GM12878 (cell line): ENCODE measurements at regions of chr4 and their contacts with region 1.

Region 1: DNA sequence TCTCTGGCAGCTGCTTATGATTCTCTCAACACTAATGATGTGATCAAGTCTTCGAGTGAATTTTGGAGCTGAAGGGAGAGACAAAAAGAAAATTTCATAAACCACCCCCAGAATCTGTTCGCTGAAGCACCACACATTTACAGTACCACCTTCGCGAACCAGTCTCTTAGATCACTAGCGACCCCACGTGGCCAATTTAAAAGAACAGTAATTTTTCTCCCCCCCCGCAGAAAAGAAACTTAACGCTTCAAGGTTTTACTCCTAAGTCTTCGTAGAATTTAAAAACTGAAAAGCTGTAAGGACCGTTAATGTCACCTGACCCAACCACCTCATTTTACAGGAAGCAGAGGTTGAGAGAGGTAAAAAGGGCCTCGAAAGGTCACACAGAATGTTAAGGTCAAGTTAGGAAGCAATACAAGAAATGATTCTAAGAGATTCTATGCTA is 187.5 kb downstream of the QDPR start:
- DNase-seq: no peak
- ATAC-seq: peak; percentile 70
- H3K4me3 ChIP-seq: no peak overlapping the region
- H3K27ac ChIP-seq: no peak overlapping the region
- H3K4me1 ChIP-seq: no peaks in the 10 kb centered on the region
- H3K27me3 ChIP-seq: no peaks in the 10 kb centered on the region
- CTCF ChIP-seq: peak; percentile 45 to 64 (median 52)
- EP300 ChIP-seq: no peak
- POLR2A ChIP-seq: no peak
- RAD21 ChIP-seq: peak; percentile 66

Region 2: DNA sequence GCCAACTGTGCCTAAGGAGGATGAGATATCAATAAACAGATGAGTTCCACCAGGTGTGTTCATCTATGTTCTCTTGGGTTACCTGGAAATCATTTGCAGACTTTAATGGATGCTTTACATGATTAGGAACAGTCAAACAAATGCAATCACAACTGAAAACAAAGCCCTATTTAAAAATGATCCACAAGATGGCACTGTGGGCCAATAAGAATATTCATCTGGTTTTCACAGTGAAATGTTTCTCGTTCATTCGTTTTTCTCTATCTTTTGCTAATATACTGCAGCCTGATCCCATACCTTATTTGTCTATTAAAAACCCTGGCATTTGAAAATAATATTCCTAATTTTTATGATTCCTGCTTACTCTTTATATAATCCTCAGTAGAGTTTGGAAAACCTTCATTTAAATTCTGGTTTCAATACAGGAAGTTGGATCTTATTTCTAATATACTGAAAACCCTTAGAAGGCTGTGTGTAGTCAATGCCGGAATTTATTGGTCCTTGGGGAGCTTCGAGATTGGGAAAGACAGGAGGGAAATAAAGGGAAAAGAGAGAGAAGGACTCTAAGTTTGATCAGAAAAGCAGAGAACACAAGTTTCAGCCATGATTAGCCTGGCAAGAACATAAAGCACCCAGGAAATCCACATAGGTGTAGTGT is 1034.4 kb before region 1 on chr4:
- CTCF ChIA-PET with region 1: interaction called, 6 read pairs
- POLR2A ChIA-PET with region 1: no interaction called
- RAD21 ChIA-PET with region 1: interaction called, 3 read pairs
- SMC1A ChIA-PET with region 1: interaction called, 10 read pairs
- in situ Hi-C with region 1: loop called (anchors 10 kb)
- intact Hi-C with region 1: loop called (anchors 10 kb)
- DNase-seq: no peak
- ATAC-seq: peak; percentile 64
- H3K4me3 ChIP-seq: no peak overlapping the region
- H3K27ac ChIP-seq: no peak overlapping the region
- H3K4me1 ChIP-seq: no peaks in the 10 kb centered on the region
- H3K27me3 ChIP-seq: peaks cover 0 to 2% of the 10 kb centered on the region in 2 experiments; a peak in 1 of 4 replicates
- CTCF ChIP-seq: peak; percentile 36 to 59 (median 44); a peak in 4 of 6 replicates
- EP300 ChIP-seq: no peak
- POLR2A ChIP-seq: no peak
- RAD21 ChIP-seq: peak; percentile 68

Region 3: GRCh38 chr4:16794816-16795445 is 529.5 kb before region 1 on chr4:
- CTCF ChIA-PET with region 1: interaction called, 5 read pairs
- POLR2A ChIA-PET with region 1: no interaction called
- RAD21 ChIA-PET with region 1: interaction called, 4 read pairs
- SMC1A ChIA-PET with region 1: interaction called, 3 read pairs
- in situ Hi-C with region 1: no loop called
- intact Hi-C with region 1: loop called (anchors 5 kb)
- DNase-seq: no peak
- ATAC-seq: peak; percentile 51; the same call in 2 of the 3 replicates
- H3K4me3 ChIP-seq: no peak overlapping the region
- H3K27ac ChIP-seq: no peak overlapping the region
- H3K4me1 ChIP-seq: no peaks in the 10 kb centered on the region
- H3K27me3 ChIP-seq: no peaks in the 10 kb centered on the region
- CTCF ChIP-seq: peak; percentile 55 to 68 (median 65)
- EP300 ChIP-seq: no peak
- POLR2A ChIP-seq: no peak
- RAD21 ChIP-seq: peak; percentile 57

Region 4: DNA sequence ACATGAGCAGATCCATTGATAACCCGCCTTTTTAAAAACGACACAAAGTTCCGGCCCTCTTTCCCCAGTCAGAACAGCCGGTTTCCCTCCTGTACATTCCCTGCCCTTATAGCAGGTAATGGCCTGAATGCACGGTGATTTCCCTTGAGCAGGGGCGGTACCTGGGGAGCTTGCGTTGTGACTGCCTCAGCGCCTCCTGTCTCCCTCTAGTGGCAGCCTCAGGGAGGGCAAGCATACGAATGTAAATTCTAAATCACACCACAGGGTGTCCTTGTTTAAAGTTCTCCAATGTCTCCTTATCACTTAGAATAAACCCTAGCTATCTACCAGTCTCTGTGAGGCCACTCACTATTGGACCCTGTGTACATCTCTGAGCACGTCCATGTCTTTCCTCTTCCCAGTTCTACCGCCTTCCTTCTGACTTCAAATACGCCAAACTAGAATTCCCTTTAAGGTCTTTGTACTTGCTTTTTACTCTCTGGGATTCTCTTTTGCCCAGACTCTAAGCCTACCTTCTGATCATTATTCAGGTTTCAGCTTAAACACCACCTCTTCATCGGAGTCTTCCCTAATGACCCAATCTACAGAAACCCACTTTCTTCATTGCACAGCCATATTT is 407.6 kb before region 1 on chr4:
- CTCF ChIA-PET with region 1: interaction called, 25 read pairs
- POLR2A ChIA-PET with region 1: no interaction called
- RAD21 ChIA-PET with region 1: interaction called, 5 read pairs
- SMC1A ChIA-PET with region 1: interaction called, 11 read pairs
- in situ Hi-C with region 1: loop called (anchors 10 kb)
- intact Hi-C with region 1: loop called (anchors 5 kb)
- DNase-seq: peak; percentile 47
- ATAC-seq: peak; percentile 100
- H3K4me3 ChIP-seq: no peak overlapping the region
- H3K27ac ChIP-seq: no peak overlapping the region
- H3K4me1 ChIP-seq: no peaks in the 10 kb centered on the region
- H3K27me3 ChIP-seq: no peaks in the 10 kb centered on the region
- CTCF ChIP-seq: peak; percentile 96 to 98 (median 97)
- EP300 ChIP-seq: no peak
- POLR2A ChIP-seq: no peak
- RAD21 ChIP-seq: peak; percentile 66

Region 5: GRCh38 chr4:17310269-17310652 is 14.1 kb before region 1 on chr4:
- CTCF ChIA-PET with region 1: interaction called, 24 read pairs
- POLR2A ChIA-PET with region 1: no interaction called
- RAD21 ChIA-PET with region 1: no interaction called
- SMC1A ChIA-PET with region 1: interaction called, 7 read pairs
- in situ Hi-C with region 1: no loop called
- intact Hi-C with region 1: no loop called
- DNase-seq: peak; percentile 48
- ATAC-seq: peak; percentile 75
- H3K4me3 ChIP-seq: no peak overlapping the region
- H3K27ac ChIP-seq: no peak overlapping the region
- H3K4me1 ChIP-seq: no peaks in the 10 kb centered on the region
- H3K27me3 ChIP-seq: no peaks in the 10 kb centered on the region
- CTCF ChIP-seq: no peak
- EP300 ChIP-seq: no peak
- POLR2A ChIP-seq: no peak
- RAD21 ChIP-seq: no peak

Region 6: GRCh38 chr4:17336524-17336961 is 12.1 kb after region 1 on chr4:
- CTCF ChIA-PET with region 1: interaction called, 17 read pairs
- POLR2A ChIA-PET with region 1: interaction called, 4 read pairs
- RAD21 ChIA-PET with region 1: interaction called, 5 read pairs
- SMC1A ChIA-PET with region 1: interaction called, 15 read pairs
- in situ Hi-C with region 1: no loop called
- intact Hi-C with region 1: no loop called
- DNase-seq: peak; percentile 93
- ATAC-seq: peak; percentile 93
- H3K4me3 ChIP-seq: no peak overlapping the region
- H3K27ac ChIP-seq: no peak overlapping the region
- H3K4me1 ChIP-seq: peaks cover 8% of the 10 kb centered on the region
- H3K27me3 ChIP-seq: no peaks in the 10 kb centered on the region
- CTCF ChIP-seq: no peak
- EP300 ChIP-seq: peak; percentile 84 to 92
- POLR2A ChIP-seq: no peak
- RAD21 ChIP-seq: no peak

Region 7: GRCh38 chr4:17347445-17347844 is 23.0 kb after region 1 on chr4:
- CTCF ChIA-PET with region 1: interaction called, 20 read pairs
- POLR2A ChIA-PET with region 1: no interaction called
- RAD21 ChIA-PET with region 1: interaction called, 3 read pairs
- SMC1A ChIA-PET with region 1: interaction called, 7 read pairs
- in situ Hi-C with region 1: no loop called
- intact Hi-C with region 1: no loop called
- DNase-seq: no peak
- ATAC-seq: peak; percentile 91
- H3K4me3 ChIP-seq: no peak overlapping the region
- H3K27ac ChIP-seq: no peak overlapping the region
- H3K4me1 ChIP-seq: no peaks in the 10 kb centered on the region
- H3K27me3 ChIP-seq: no peaks in the 10 kb centered on the region
- CTCF ChIP-seq: peak; percentile 55 to 65 (median 57); a peak in 5 of 6 replicates
- EP300 ChIP-seq: no peak
- POLR2A ChIP-seq: no peak
- RAD21 ChIP-seq: peak; percentile 74

Region 8: GRCh38 chr4:17376205-17376604 is 51.8 kb after region 1 on chr4:
- CTCF ChIA-PET with region 1: no interaction called
- POLR2A ChIA-PET with region 1: no interaction called
- RAD21 ChIA-PET with region 1: no interaction called
- SMC1A ChIA-PET with region 1: no interaction called
- in situ Hi-C with region 1: no loop called
- intact Hi-C with region 1: no loop called
- DNase-seq: no peak
- ATAC-seq: no peak
- H3K4me3 ChIP-seq: no peak overlapping the region
- H3K27ac ChIP-seq: no peak overlapping the region
- H3K4me1 ChIP-seq: no peaks in the 10 kb centered on the region
- H3K27me3 ChIP-seq: no peaks in the 10 kb centered on the region
- CTCF ChIP-seq: no peak
- EP300 ChIP-seq: no peak
- POLR2A ChIP-seq: no peak
- RAD21 ChIP-seq: no peak